RWPE1 (cell line): ENCODE measurements at regions of chr18 and their contacts with region 1.

Region 1: GRCh38 chr18:3869848-3870247 is 419.9 kb downstream of the TGIF1 start:
- DNase-seq: peak; percentile 39
- H3K27ac ChIP-seq: no peak overlapping the region
- CTCF ChIP-seq: peak; percentile 44

Region 2: GRCh38 chr18:3703732-3704176 is 166.1 kb before region 1 on chr18:
- CTCF ChIA-PET with region 1: interaction called, 19 read pairs
- POLR2A ChIA-PET with region 1: no interaction called
- DNase-seq: peak; percentile 64
- H3K27ac ChIP-seq: no peak overlapping the region
- CTCF ChIP-seq: peak; percentile 85

Region 3: GRCh38 chr18:3771121-3771971 is 98.5 kb before region 1 on chr18:
- CTCF ChIA-PET with region 1: interaction called, 13 read pairs
- POLR2A ChIA-PET with region 1: no interaction called
- DNase-seq: peak; percentile 91
- H3K27ac ChIP-seq: peak overlapping the region; percentile 31; the same call in 1 of the 2 replicates
- CTCF ChIP-seq: peak; percentile 96

Region 4: DNA sequence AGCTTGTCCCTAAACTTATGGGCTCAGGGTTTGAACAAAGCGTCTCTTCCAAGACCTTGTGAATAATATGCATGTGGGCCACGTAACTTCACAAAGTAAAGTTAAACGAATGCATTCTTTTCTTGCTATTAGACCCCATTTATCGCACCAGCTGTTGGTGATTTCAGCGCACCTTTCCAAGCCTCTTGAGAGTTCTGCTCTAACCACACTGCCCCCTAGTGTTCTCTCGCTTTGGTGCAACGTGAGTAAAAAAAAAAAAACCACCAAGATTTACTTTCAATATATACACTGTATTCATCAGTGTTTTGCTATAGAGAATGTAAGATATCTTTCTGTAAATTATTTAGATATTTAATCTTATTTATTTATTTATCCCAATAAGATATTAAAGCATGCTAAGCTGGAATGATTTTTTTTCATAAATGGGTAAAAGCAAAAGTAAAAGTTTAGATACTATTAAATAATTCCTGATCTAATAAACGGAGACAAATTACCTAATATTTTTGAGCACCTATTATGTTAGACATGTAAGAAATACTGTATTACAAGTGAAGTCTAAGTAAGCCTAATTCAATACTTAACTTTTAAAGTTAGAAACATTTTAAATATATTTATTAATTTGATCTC is 125.7 kb after region 1 on chr18:
- CTCF ChIA-PET with region 1: interaction called, 10 read pairs
- POLR2A ChIA-PET with region 1: no interaction called
- DNase-seq: peak; percentile 22
- H3K27ac ChIP-seq: no peak overlapping the region
- CTCF ChIP-seq: peak; percentile 88

Region 5: DNA sequence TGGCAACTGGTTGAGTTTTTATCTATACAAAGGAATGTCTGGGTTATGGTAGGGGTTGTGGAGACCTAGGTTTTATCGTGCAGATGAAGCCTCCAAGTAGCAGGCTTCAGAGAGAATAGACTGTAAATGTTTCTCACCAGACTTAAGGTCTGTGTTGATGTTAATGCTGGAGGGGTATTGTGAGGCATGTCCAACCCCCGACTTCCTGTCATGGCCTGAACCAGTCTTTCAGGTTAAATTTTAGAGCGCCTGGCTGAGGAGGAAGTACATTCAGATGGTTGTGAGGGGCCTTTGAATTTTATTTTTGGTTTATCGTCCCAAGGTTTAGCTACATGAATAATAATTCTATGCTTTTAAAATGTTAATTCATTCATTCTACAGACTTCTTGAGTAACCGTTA is 150.2 kb after region 1 on chr18:
- CTCF ChIA-PET with region 1: no interaction called
- POLR2A ChIA-PET with region 1: no interaction called
- DNase-seq: no peak
- H3K27ac ChIP-seq: no peak overlapping the region
- CTCF ChIP-seq: no peak